Sigmoid colon (tissue), 7 donors: ENCODE measurements at regions of chr5 and their contacts with region 1.

Region 1: GRCh38 chr5:65624571-65625555 is at the starts of genes SHLD3 and TRAPPC13:
- DNase-seq: peak; percentile 92
- H3K4me3 ChIP-seq: peak within 1 kb of the TSS; percentile 70 to 90 (median 76)
- H3K27ac ChIP-seq: peak within 1 kb of the TSS; percentile 80 to 92 (median 83)
- H3K4me1 ChIP-seq: peaks cover 0 to 41% (median 34%) of the 10 kb centered on the region in 4 donors
- H3K27me3 ChIP-seq: no peaks in the 10 kb centered on the region
- CTCF ChIP-seq: peak in 1 of 4 experiments; percentile 40
- EP300 ChIP-seq: no peak
- POLR2A ChIP-seq: no peak
- total RNA-seq, gene SHLD3: 2.4 to 3.6 (median 3.3) TPM
- total RNA-seq, gene TRAPPC13: 24.4 to 43.2 (median 30.5) TPM

Region 2: GRCh38 chr5:66041627-66042026 is 416.8 kb after region 1 on chr5:
- intact Hi-C with region 1: loop called (anchors 10 kb)
- DNase-seq: no peak
- H3K4me3 ChIP-seq: no peak overlapping the region
- H3K27ac ChIP-seq: no peak overlapping the region
- H3K4me1 ChIP-seq: no peaks in the 10 kb centered on the region
- H3K27me3 ChIP-seq: no peaks in the 10 kb centered on the region
- CTCF ChIP-seq: no peak
- EP300 ChIP-seq: no peak
- POLR2A ChIP-seq: no peak

Region 3: DNA sequence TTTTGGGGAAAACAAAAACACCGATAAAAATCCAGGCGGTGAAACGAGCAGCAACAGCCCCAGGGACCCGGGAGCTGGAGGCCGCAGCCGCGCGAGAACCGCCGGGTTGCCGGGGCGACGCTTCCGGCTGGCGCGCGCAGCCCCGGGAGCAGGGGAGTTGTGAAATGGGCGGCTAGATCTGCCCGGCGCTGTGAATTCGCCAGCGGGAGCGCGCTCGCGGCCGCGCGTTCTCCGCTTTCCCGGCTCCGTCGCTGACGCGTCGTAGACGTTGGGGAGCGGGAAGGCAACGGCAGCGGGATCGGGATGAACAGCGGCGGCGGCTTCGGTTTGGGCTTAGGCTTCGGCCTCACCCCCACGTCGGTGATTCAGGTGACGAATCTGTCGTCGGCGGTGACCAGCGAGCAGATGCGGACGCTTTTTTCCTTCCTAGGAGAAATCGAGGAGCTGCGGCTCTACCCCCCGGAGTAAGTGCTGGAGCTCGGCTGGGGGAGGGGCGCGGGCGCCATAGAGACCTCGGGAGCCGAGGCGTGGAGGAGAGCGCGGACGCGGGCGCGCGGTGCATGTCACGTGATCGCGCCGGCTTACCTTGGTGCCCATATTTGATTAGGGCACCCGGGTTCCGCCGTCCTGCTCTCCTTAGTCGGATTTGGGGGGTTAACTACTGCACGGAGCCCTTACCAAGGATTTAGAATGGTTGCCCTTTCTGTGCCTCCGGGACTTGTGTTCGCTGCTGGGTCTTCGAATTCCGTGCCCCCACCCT is 519.4 kb after region 1 on chr5 and contains the start of gene SREK1:
- intact Hi-C with region 1: loop called (anchors 5 kb)
- DNase-seq: peak; percentile 96
- H3K4me3 ChIP-seq: peak within 1 kb of the TSS; percentile 83 to 90 (median 86)
- H3K27ac ChIP-seq: peak within 1 kb of the TSS; percentile 96 to 99 (median 99)
- H3K4me1 ChIP-seq: peaks cover 0 to 46% (median 28%) of the 10 kb centered on the region in 4 donors
- H3K27me3 ChIP-seq: no peaks in the 10 kb centered on the region
- CTCF ChIP-seq: no peak
- EP300 ChIP-seq: no peak
- POLR2A ChIP-seq: peak; percentile 71 to 75
- total RNA-seq, gene SREK1: 63.5 to 127 (median 85.6) TPM